CD8-positive, alpha-beta T cell (primary cell): ENCODE measurements at regions of chr4 and their contacts with region 1.

Region 1: GRCh38 chr4:153611679-153612078 is 72.4 kb upstream of the TLR2 start:
- DNase-seq: no peak
- ATAC-seq: no peak
- H3K4me3 ChIP-seq: no peak overlapping the region
- H3K4me3 Mint-ChIP-seq: no peak overlapping the region
- H3K27ac ChIP-seq: no peak overlapping the region
- H3K27ac Mint-ChIP-seq: peak overlapping the region; percentile 55
- H3K4me1 ChIP-seq: no peaks in the 10 kb centered on the region
- H3K4me1 Mint-ChIP-seq: peaks cover 36% of the 10 kb centered on the region
- H3K27me3 ChIP-seq: no peaks in the 10 kb centered on the region
- H3K27me3 Mint-ChIP-seq: no peaks in the 10 kb centered on the region
- CTCF ChIP-seq: no peak

Region 2: DNA sequence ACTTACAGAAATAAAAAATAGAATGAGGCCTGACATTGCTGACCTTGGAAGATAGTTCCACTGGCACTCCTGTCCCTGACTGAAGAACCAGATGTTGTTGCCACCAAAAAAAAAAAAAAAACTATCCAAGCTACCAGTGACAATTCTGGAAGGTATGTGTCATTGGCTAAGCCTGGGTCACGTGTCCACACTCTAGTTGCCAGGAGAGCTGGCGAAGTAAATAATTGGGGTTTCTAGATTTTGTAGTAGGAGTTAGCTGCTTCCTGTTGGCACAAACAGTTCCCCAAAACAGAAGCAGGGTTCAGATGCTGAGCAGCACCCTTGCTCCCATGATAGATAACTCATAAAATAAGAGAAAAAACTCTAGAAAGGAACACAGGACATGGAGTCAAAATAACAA is 246.7 kb before region 1 on chr4:
- CTCF ChIA-PET with region 1: no interaction called
- POLR2A ChIA-PET with region 1: no interaction called
- intact Hi-C with region 1: no loop called
- DNase-seq: no peak
- ATAC-seq: no peak
- H3K4me3 ChIP-seq: no peak overlapping the region
- H3K4me3 Mint-ChIP-seq: no peak overlapping the region
- H3K27ac ChIP-seq: no peak overlapping the region
- H3K27ac Mint-ChIP-seq: no peak overlapping the region
- H3K4me1 ChIP-seq: no peaks in the 10 kb centered on the region
- H3K4me1 Mint-ChIP-seq: peaks cover 3% of the 10 kb centered on the region
- H3K27me3 ChIP-seq: no peaks in the 10 kb centered on the region
- H3K27me3 Mint-ChIP-seq: no peaks in the 10 kb centered on the region
- CTCF ChIP-seq: no peak

Region 3: GRCh38 chr4:153579872-153580271 is 31.8 kb before region 1 on chr4:
- CTCF ChIA-PET with region 1: no interaction called
- POLR2A ChIA-PET with region 1: no interaction called
- intact Hi-C with region 1: loop called in 1 of 2 experiments (anchors 5 kb)
- DNase-seq: no peak
- ATAC-seq: no peak
- H3K4me3 ChIP-seq: no peak overlapping the region
- H3K4me3 Mint-ChIP-seq: no peak overlapping the region
- H3K27ac ChIP-seq: no peak overlapping the region
- H3K27ac Mint-ChIP-seq: peak overlapping the region; percentile 41
- H3K4me1 ChIP-seq: peaks cover 7% of the 10 kb centered on the region
- H3K4me1 Mint-ChIP-seq: peaks cover 35% of the 10 kb centered on the region
- H3K27me3 ChIP-seq: no peaks in the 10 kb centered on the region
- H3K27me3 Mint-ChIP-seq: no peaks in the 10 kb centered on the region
- CTCF ChIP-seq: no peak

Region 4: GRCh38 chr4:153594210-153594609 is 17.5 kb before region 1 on chr4:
- CTCF ChIA-PET with region 1: no interaction called
- POLR2A ChIA-PET with region 1: interaction called, 3 read pairs
- intact Hi-C with region 1: loop called in 1 of 2 experiments (anchors 2 kb)
- DNase-seq: no peak
- ATAC-seq: no peak
- H3K4me3 ChIP-seq: no peak overlapping the region
- H3K4me3 Mint-ChIP-seq: no peak overlapping the region
- H3K27ac ChIP-seq: no peak overlapping the region
- H3K27ac Mint-ChIP-seq: no peak overlapping the region
- H3K4me1 ChIP-seq: no peaks in the 10 kb centered on the region
- H3K4me1 Mint-ChIP-seq: peaks cover 3% of the 10 kb centered on the region
- H3K27me3 ChIP-seq: no peaks in the 10 kb centered on the region
- H3K27me3 Mint-ChIP-seq: no peaks in the 10 kb centered on the region
- CTCF ChIP-seq: no peak